ENCODE measurements at regions of chr5 and their contacts with region 1.

Region 1: DNA sequence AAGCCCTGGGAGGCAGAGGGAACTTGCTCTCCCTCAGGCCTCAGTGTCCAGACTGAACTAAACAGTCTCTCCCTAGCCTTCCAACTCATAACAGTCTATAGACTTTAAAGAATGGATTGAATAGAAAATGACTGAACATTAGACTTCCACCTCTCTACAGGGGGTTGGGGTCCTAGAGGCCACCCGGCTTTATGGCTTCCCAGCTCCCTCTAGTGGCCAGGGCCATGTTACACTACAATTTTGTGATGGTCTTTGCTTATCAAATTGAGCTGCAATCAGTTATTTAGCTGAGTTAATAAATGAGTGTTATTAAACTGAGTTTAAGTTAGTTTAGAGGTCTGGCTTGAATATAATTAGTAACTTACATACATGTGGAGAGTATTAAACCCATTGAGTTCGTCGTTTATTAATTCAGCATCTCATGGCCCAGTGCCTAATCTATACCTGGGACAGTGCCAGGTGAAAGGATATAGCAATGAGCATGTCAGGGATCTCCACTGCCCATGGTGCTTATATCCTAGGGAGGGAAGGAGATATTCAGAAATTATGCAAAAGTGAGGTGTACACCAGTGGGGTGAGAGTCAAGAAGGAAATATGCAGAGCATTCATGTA is 105.2 kb downstream of the SH3TC2 start:
- DNase-seq: no peak
- H3K4me3 ChIP-seq: no peak overlapping the region
- CTCF ChIP-seq: peak; percentile 63

Region 2: GRCh38 chr5:148740966-148741742 is 216.5 kb before region 1 on chr5:
- CTCF ChIA-PET with region 1: interaction called, 89 read pairs
- POLR2A ChIA-PET with region 1: no interaction called
- DNase-seq: peak; percentile 61
- H3K4me3 ChIP-seq: no peak overlapping the region
- CTCF ChIP-seq: peak; percentile 42

Region 3: DNA sequence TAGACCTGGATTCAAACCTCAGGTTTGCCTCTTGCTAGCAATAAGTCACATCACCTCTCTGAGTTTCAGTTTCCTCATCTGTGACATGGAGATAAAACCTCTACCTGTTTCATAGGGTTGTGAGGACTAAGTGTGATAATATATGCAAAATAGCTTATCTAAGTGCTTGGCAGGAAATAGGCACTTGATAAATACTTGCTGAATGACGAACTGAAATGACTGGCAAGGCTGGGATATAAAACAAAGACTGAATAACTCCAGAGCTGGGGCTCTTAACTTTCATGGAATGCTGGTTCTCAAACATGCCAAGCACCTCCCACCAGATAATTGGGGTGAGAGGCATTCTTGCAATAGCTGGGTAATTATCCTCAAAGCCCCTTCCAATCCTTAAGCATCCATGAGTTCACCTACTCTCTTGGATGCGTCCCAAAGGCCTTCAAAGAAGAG is 43.7 kb before region 1 on chr5:
- CTCF ChIA-PET with region 1: interaction called, 10 read pairs
- POLR2A ChIA-PET with region 1: no interaction called
- DNase-seq: peak; percentile 91
- H3K4me3 ChIP-seq: no peak overlapping the region
- CTCF ChIP-seq: no peak

Region 4: DNA sequence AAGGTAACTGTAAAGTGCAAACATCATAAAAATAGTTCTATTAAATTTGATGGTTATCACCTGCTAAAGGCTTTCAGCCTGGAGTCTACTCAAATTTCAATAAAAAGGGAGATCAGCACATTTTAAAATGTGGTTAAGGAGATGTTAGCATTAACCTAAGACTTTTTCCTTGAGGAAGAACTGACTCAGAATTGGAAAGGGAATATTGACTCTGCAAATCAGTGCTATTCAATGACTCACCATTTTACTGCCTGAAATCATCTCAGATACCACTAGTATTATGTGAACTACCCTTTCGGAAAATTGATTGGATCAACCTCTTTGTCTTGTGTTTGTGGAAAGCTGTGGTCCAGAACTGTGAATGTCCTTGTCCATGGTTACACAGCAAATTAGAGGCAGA is 18.0 kb before region 1 on chr5:
- CTCF ChIA-PET with region 1: interaction called, 18 read pairs
- POLR2A ChIA-PET with region 1: no interaction called
- DNase-seq: peak; percentile 29
- H3K4me3 ChIP-seq: no peak overlapping the region
- CTCF ChIP-seq: no peak

Region 5: DNA sequence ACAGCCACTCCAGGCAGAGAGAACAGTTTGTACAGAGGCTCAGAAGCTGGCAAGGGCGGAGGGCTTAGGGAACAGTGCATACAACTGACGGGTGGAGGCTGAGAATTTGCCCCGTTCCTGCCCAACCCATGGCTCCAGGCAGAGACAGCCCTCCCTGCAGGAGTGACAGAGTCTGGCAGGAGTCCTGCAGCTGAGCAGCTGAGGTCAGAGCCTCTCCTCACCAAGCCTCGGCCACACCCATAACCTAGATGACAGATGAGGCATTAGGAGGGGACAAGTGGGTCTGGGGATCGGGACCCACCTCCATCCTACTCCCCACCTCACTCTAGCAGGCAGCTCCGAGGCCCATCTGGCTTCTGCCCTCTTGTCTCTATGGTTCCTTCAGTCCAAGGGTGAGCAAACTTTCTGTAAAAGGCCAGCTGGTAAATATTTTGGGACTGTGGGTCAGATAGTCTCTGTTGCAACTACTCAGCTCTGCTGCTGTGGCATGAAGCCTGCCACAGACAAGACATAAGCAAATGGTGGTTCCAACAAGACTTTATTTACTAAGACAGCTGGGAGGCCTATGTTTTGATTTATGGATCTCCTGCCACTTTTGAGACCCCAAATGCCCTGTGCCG is 21.5 kb after region 1 on chr5:
- CTCF ChIA-PET with region 1: interaction called, 14 read pairs
- POLR2A ChIA-PET with region 1: no interaction called
- DNase-seq: no peak
- H3K4me3 ChIP-seq: no peak overlapping the region
- CTCF ChIP-seq: no peak